Pancreas (tissue), 10 donors: ENCODE measurements at regions of chr3 and their contacts with region 1.

Region 1: DNA sequence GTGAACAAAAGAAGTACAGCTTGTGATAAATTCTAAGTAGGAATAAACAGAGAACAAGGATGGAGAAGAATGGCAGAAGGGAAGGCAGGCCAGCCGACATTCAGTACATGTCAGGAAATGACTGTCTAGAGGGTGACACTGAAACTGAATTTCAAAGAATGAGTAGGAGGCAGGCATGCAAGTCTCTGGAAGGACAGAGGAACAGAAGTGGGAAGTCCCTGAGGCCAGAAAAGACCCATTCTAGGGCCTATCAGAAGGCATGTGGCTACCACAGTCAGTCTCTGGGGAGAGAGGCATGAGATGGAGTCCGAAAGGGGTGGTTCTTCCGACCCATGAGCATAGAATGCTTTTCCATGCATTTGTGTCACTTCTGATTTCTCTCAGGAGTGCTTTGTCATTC is 243.5 kb upstream of the UBE2E2 start:
- DNase-seq: no peak
- ATAC-seq: peak in 1 of 4 donors; percentile 37
- H3K4me3 ChIP-seq: no peak overlapping the region
- H3K27ac ChIP-seq: no peak overlapping the region
- H3K4me1 ChIP-seq: no peaks in the 10 kb centered on the region
- H3K27me3 ChIP-seq: peaks cover 0 to 13% (median 2%) of the 10 kb centered on the region in 4 donors
- CTCF ChIP-seq: no peak

Region 2: GRCh38 chr3:22565393-22565792 is 394.2 kb before region 1 on chr3:
- intact Hi-C with region 1: loop called in 1 of 3 experiments (anchors 10 kb)
- DNase-seq: no peak
- ATAC-seq: no peak
- H3K4me3 ChIP-seq: no peak overlapping the region
- H3K27ac ChIP-seq: no peak overlapping the region
- H3K4me1 ChIP-seq: no peaks in the 10 kb centered on the region
- H3K27me3 ChIP-seq: no peaks in the 10 kb centered on the region
- CTCF ChIP-seq: no peak

Region 3: GRCh38 chr3:22585504-22585903 is 374.1 kb before region 1 on chr3:
- intact Hi-C with region 1: loop called in 1 of 3 experiments (anchors 10 kb)
- DNase-seq: no peak
- ATAC-seq: no peak
- H3K4me3 ChIP-seq: no peak overlapping the region
- H3K27ac ChIP-seq: no peak overlapping the region
- H3K4me1 ChIP-seq: peaks cover 0 to 7% (median 0%) of the 10 kb centered on the region in 3 donors
- H3K27me3 ChIP-seq: no peaks in the 10 kb centered on the region
- CTCF ChIP-seq: no peak